Right ventricle myocardium superior (tissue), 1 donor: ENCODE measurements at regions of chr3 and their contacts with region 1.

Region 1: DNA sequence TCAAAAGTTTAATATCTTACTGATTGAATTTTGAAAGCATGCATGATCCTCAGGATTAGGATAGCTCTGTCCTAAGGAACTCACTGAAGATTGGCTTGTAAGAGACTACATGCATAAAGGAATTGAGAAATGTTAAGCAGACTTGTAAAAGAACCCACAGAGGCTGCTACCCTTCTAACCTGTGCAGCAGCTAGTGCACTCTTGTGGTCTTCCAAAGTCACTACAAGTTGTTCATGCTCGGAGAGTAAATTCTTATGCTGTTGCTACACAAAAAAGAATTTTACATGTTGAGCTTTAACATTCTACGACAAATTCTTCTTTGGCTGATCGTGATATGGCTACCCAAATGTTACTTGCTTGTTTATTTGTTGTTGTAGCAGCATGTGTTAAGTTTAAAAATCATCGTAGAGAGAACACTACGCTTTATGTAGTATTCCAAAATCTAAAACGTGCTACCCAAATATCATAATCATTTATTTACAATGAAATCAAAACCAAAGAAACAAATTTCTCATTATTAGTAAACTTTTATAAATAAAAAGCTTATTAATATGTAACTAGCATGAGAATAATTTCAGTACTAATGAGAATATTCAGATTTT is 55.0 kb downstream of the GOLIM4 start:
- DNase-seq: no peak
- ATAC-seq: peak; percentile 79

Region 2: GRCh38 chr3:167899093-167899492 is 141.6 kb before region 1 on chr3:
- intact Hi-C with region 1: no loop called
- DNase-seq: no peak
- ATAC-seq: no peak

Region 3: DNA sequence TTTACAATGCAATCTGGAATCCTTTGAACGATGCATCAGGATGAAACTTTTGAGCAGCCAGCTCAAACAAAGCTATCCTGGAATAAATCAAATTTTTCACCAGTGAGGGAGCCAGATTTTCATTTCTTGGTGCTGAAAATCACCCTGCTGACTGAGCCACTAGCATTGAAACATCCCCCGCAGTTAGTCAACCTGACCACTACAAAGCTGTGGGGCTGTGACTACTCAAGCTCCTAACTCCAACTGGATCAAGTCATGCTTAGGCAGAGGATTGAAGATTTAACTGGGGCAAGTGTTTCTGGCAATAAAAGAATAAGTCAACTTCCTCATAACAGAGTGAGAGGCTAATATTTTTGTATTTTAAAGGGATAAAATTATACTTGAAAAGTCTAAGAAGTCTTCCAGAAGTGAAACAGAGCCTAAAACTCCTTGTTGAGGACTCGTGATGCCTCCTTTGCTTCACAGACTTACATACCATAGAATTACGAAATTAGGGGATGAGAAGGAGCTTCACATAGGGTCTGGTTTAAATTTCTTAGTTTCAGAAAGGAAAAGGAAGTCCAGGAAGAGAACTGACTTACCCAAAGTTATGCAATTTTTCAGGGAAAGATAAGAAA is 127.4 kb before region 1 on chr3:
- intact Hi-C with region 1: no loop called
- DNase-seq: no peak
- ATAC-seq: no peak

Region 4: DNA sequence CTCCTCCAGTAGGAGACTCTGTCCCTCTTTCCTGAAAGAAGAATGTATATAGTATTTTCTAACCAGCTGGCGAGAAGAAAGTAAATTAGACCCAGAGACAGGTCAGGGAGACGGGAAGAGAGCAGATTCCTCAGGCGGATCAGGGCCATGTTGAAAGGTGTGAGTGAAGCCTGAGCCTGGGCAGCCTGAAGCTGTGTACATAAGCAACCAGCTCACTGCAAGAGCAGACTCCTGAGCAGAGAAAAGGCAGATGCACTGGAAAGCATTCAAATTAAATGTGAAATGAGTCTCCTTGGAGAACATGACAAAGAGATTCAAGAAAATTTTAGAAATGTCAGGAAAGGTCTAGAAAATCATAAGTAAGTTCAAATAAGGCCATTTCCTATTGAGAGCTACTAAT is 110.7 kb before region 1 on chr3:
- intact Hi-C with region 1: loop called (anchors 2 kb)
- DNase-seq: no peak
- ATAC-seq: peak; percentile 79